A673 (cell line): ENCODE measurements at regions of chr3 and their contacts with region 1.

Region 1: DNA sequence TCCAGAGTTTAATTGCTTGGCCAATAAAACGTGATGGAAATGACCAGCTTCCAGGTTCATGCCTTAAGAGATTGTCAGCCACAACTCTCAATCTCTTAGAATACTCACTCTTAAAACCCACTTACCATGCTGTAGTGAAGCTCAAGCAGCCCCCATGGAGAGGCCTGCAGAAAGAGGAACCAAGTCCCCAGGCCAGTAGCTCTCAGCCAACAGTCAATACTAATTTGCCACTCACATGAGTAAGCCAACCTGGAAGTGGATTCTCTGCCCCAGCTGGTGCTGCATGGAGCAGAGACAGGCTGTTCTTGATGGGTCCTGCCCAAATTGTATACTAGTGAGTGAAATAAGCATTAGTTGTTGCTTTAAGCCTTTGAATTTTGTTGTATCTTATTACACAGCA is 155.9 kb downstream of the OXSM start:
- DNase-seq: peak; percentile 72
- H3K4me3 ChIP-seq: no peak overlapping the region
- H3K27ac ChIP-seq: peak overlapping the region; percentile 58
- H3K4me1 ChIP-seq: peaks cover 18% of the 10 kb centered on the region
- H3K27me3 ChIP-seq: no peaks in the 10 kb centered on the region
- CTCF ChIP-seq: no peak

Region 2: GRCh38 chr3:24793896-24794295 is 1151.9 kb before region 1 on chr3:
- CTCF ChIA-PET with region 1: no interaction called
- POLR2A ChIA-PET with region 1: interaction called, 13 read pairs
- intact Hi-C with region 1: no loop called
- DNase-seq: no peak
- H3K4me3 ChIP-seq: no peak overlapping the region
- H3K27ac ChIP-seq: no peak overlapping the region
- H3K4me1 ChIP-seq: no peaks in the 10 kb centered on the region
- H3K27me3 ChIP-seq: no peaks in the 10 kb centered on the region
- CTCF ChIP-seq: no peak

Region 3: GRCh38 chr3:25973122-25973521 is 27.3 kb after region 1 on chr3:
- CTCF ChIA-PET with region 1: no interaction called
- POLR2A ChIA-PET with region 1: no interaction called
- intact Hi-C with region 1: no loop called
- DNase-seq: no peak
- H3K4me3 ChIP-seq: no peak overlapping the region
- H3K27ac ChIP-seq: no peak overlapping the region
- H3K4me1 ChIP-seq: no peaks in the 10 kb centered on the region
- H3K27me3 ChIP-seq: no peaks in the 10 kb centered on the region
- CTCF ChIP-seq: no peak

Region 4: DNA sequence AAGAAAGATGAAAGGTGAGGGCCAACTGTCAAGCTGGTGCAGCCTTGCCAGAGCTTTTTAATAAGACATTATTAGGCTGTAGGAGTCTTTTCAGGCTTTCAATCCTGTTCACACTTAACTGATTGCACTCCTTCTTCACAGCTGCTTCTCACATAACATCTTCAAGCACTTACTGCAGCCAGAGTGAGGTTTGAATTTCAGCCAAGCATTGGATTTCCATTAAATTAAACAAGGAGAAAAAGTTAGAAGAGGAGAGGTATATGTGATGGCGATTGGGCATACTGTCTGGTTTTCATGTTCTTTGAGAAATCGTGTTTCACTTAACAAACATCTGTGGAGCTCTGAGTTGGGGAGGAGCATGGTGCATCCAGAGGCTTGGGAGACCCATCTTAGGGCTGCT is 284.0 kb after region 1 on chr3:
- CTCF ChIA-PET with region 1: no interaction called
- POLR2A ChIA-PET with region 1: no interaction called
- intact Hi-C with region 1: loop called (anchors 5 kb)
- DNase-seq: no peak
- H3K4me3 ChIP-seq: no peak overlapping the region
- H3K27ac ChIP-seq: no peak overlapping the region
- H3K4me1 ChIP-seq: no peaks in the 10 kb centered on the region
- H3K27me3 ChIP-seq: no peaks in the 10 kb centered on the region
- CTCF ChIP-seq: no peak